ENCODE measurements at regions of chr3 and their contacts with region 1.

Region 1: GRCh38 chr3:23202921-23203707 is at the start of gene UBE2E2:
- DNase-seq: peak; percentile 82
- ATAC-seq: peak; percentile 73
- H3K4me3 Mint-ChIP-seq: peak within 1 kb of the TSS; percentile 97
- H3K27ac Mint-ChIP-seq: peak within 1 kb of the TSS; percentile 91
- H3K4me1 Mint-ChIP-seq: peaks cover 40% of the 10 kb centered on the region
- H3K27me3 Mint-ChIP-seq: no peaks in the 10 kb centered on the region
- CTCF ChIP-seq: no peak
- total RNA-seq, gene UBE2E2: 47.0 and 48.5 TPM in 2 replicates

Region 2: DNA sequence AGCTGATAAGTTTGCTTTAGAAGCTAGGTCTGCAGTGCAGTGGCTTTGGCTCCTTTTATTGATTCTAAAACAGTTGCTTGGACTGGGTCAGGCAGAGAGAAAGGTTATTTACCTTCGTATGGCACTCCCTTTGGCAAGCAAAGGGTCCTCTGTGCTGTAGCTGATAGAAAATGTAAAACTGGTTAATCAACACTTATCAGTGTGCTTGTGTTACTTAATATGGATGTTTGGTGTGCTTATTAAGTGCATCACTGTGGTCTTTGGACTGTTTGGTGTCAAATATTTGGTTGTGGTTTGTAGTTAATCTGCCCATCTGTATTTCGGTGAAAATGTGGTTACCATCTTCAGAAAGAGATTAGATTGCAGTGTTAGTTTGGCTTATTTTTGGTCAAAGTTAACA is 16.0 kb after region 1 on chr3:
- CTCF ChIA-PET with region 1: no interaction called
- POLR2A ChIA-PET with region 1: interaction called, 4 read pairs
- intact Hi-C with region 1: loop called (anchors 1 kb)
- DNase-seq: no peak
- ATAC-seq: no peak
- H3K4me3 Mint-ChIP-seq: no peak overlapping the region
- H3K27ac Mint-ChIP-seq: peak overlapping the region; percentile 32
- H3K4me1 Mint-ChIP-seq: peaks cover 61% of the 10 kb centered on the region
- H3K27me3 Mint-ChIP-seq: no peaks in the 10 kb centered on the region
- CTCF ChIP-seq: no peak

Region 3: DNA sequence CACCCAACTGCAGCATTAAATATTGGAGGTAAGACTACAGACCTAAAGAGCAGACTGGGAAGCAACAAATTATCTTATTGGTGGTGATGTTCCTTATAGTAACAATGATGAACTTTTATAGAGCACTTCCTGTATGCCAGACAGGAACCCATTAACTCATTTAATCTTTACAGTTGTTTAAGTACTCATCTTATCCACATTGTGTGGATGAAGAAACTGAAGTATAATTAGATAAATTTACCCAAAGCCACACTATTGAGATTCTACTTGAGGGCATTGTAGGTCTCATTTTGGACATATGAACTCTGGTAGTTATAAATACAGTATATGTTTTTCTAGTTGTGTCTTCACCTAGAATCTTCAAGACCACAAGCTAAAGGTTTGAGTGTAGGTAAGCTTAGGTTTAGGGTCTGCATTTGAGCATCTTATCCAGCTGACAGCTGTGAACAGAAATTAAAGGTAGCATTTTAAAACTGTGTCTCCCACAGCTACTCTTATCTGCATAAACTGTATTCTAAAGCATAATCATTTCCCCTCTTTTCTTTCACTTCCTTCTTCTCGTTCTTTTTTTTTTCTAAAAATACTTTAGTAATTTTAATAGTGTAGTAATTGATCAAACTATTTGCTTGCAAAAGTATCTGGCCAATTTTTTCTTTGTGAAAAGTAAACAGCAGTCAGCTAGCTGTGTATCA is 138.2 kb after region 1 on chr3:
- CTCF ChIA-PET with region 1: no interaction called
- POLR2A ChIA-PET with region 1: no interaction called
- intact Hi-C with region 1: loop called (anchors 5 kb)
- DNase-seq: no peak
- ATAC-seq: peak; percentile 77
- H3K4me3 Mint-ChIP-seq: peak overlapping the region; percentile 39
- H3K27ac Mint-ChIP-seq: peak overlapping the region; percentile 74
- H3K4me1 Mint-ChIP-seq: peaks cover 59% of the 10 kb centered on the region
- H3K27me3 Mint-ChIP-seq: no peaks in the 10 kb centered on the region
- CTCF ChIP-seq: no peak

Region 4: DNA sequence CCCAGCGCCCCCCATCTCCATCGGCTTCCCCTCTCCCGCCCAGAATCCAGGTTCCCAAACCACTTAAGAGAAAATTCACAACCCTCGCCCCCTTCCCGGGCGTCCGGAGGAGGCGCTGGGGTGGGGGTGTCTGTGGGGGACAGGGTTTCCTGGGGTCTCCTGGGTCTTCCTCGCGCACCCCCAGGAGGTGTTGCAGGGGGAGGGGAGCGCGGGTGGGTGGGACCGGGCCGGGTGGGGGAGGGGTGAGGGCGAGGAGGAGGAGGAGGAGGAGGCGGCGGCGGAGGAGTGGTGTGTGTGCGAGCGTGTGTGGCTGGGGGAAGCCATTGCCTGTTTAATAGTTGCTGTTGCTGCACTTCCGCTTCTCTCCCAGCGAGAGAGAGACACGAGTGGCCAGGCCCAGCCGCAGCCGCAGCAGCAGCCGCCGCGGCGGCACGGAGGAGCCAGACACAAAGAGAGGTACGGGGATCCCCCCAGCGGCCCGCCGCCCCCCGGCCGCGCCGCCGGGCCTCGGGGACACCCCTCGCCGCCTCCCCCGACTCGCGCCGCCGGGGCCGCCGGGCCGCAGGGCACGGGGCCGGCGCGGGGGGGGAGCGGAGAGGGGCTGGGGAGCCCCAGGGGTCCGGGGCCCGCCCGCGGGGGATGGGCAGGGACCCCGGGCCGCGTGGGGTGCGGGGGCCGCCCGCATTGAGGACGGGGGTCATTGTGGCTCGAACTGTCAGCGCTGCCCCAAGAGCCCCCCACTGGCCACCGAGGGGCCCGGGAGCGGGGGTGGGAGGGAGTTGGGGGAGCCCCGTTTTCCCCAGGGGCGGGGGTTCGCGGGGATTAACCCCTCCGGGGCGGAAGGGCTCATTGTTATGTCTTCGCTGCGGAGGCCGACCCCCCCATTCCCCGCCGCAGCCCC is 602.8 kb after region 1 on chr3 and contains the start of gene UBE2E1:
- CTCF ChIA-PET with region 1: no interaction called
- POLR2A ChIA-PET with region 1: no interaction called
- intact Hi-C with region 1: loop called (anchors 2 kb)
- DNase-seq: peak; percentile 68
- ATAC-seq: peak; percentile 77
- H3K4me3 Mint-ChIP-seq: peak within 1 kb of the TSS; percentile 97
- H3K27ac Mint-ChIP-seq: peak within 1 kb of the TSS; percentile 97
- H3K4me1 Mint-ChIP-seq: peaks cover 41% of the 10 kb centered on the region
- H3K27me3 Mint-ChIP-seq: no peaks in the 10 kb centered on the region
- CTCF ChIP-seq: no peak
- total RNA-seq, gene UBE2E1: 79.9 and 85.2 TPM in 2 replicates

Region 5: DNA sequence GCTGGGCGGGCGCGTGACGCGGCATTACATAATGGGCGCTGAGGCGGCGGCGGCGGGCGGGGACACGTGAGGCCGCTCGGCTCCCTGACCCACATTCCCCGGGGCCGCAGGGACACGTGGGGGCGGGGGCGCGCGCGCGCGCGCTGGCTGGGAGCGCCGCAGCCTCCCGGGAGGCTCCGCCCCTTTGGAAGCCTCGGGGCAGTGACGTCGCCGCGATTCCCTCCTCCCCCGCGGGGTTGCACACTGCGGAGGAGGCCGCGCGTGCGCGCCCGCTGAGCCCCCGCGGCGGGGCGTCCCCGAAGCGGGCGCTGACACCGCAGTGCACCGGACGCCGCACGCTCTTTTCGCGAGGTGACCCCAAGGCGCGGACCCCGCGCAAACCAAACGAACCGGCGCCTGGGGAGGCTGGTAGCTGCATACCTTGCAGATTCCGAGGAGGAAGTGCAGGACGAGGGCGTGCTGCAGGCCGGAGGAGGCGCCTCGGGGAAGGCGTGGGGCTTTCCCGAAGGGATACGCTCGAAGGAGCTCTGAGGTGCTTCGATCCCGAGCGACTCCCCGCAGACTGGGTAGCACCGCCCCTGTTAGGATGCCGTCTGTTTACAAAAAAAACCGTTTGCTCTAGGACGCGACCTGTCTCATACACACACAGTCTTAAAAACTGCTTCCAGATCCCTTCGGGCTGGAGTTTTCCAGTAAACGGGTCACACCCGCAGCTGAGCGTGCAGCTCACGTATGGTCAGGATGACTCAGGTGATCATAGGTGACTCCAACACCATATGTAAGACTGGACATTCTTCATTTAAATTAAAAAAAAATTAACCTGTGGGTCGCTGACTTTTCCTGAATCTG is 743.0 kb after region 1 on chr3:
- CTCF ChIA-PET with region 1: no interaction called
- POLR2A ChIA-PET with region 1: interaction called, 3 read pairs
- intact Hi-C with region 1: loop called (anchors 1 kb)
- DNase-seq: peak; percentile 97
- ATAC-seq: peak; percentile 79
- H3K4me3 Mint-ChIP-seq: peak overlapping the region; percentile 86
- H3K27ac Mint-ChIP-seq: peak overlapping the region; percentile 94
- H3K4me1 Mint-ChIP-seq: peaks cover 44% of the 10 kb centered on the region
- H3K27me3 Mint-ChIP-seq: no peaks in the 10 kb centered on the region
- CTCF ChIP-seq: no peak

Region 6: GRCh38 chr3:24177201-24177600 is 974.1 kb after region 1 on chr3:
- CTCF ChIA-PET with region 1: no interaction called
- POLR2A ChIA-PET with region 1: no interaction called
- intact Hi-C with region 1: no loop called
- DNase-seq: no peak
- ATAC-seq: no peak
- H3K4me3 Mint-ChIP-seq: no peak overlapping the region
- H3K27ac Mint-ChIP-seq: no peak overlapping the region
- H3K4me1 Mint-ChIP-seq: no peaks in the 10 kb centered on the region
- H3K27me3 Mint-ChIP-seq: no peaks in the 10 kb centered on the region
- CTCF ChIP-seq: no peak